ENCODE measurements at regions of chr12 and their contacts with region 1.

Region 1: GRCh38 chr12:45762185-45763110 is 32.9 kb downstream of the ARID2 start:
- DNase-seq: peak in 7 of 9 donors; percentile 2 to 37 (median 14)
- ATAC-seq: peak; percentile 74
- H3K4me3 ChIP-seq: no peak overlapping the region
- H3K4me3 Mint-ChIP-seq: peak overlapping the region in 1 of 10 donors; percentile 31
- H3K27ac ChIP-seq: no peak overlapping the region
- H3K27ac Mint-ChIP-seq: peak overlapping the region in 1 of 9 donors; percentile 49
- H3K4me1 ChIP-seq: peaks cover 0 to 7% of the 10 kb centered on the region in 2 donors
- H3K4me1 Mint-ChIP-seq: peaks cover 16 to 83% (median 64%) of the 10 kb centered on the region in 7 donors
- H3K27me3 ChIP-seq: no peaks in the 10 kb centered on the region
- H3K27me3 Mint-ChIP-seq: no peaks in the 10 kb centered on the region

Region 2: GRCh38 chr12:45773747-45774146 is 11.3 kb after region 1 on chr12:
- CTCF ChIA-PET with region 1: interaction called, 3 read pairs
- POLR2A ChIA-PET with region 1: interaction called, 3 read pairs
- intact Hi-C with region 1: loop called in 1 of 2 experiments (anchors 2 kb)
- DNase-seq: no peak
- ATAC-seq: no peak
- H3K4me3 ChIP-seq: no peak overlapping the region
- H3K4me3 Mint-ChIP-seq: peak overlapping the region in 1 of 10 donors; percentile 23
- H3K27ac ChIP-seq: no peak overlapping the region
- H3K27ac Mint-ChIP-seq: peak overlapping the region in 1 of 9 donors; percentile 20
- H3K4me1 ChIP-seq: peaks cover 0 to 6% of the 10 kb centered on the region in 2 donors
- H3K4me1 Mint-ChIP-seq: peaks cover 18 to 78% (median 65%) of the 10 kb centered on the region in 7 donors
- H3K27me3 ChIP-seq: no peaks in the 10 kb centered on the region
- H3K27me3 Mint-ChIP-seq: no peaks in the 10 kb centered on the region

Region 3: DNA sequence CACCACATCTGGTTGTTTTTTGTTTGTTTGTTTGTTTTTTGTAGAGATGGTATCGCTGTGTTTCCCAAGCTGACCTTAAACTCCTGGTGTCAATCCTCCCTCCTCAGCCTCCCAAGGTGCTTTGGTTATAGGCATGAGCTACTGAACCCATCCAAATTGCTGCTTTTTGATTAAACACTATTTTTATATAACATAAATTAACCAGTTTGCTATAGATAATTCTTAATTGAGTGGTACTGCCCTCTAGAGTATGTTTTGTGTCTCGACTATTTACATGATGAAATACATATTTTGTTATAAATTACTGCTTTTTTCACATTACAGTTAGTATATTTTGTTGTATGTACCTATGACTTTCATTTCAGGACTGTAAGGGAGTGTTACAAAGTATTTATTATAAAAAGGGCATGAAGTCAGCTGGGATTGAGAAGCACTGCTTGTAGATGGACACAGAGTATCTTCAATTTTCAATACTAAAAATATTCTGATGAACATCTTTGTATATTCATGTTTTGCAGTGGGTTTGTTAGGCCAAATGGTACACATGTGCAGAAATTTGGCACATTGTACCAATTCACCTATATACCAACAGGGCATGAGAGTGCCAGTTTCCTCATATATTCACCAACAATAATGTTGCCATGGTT is 242.8 kb after region 1 on chr12:
- CTCF ChIA-PET with region 1: no interaction called
- POLR2A ChIA-PET with region 1: no interaction called
- intact Hi-C with region 1: loop called (anchors 1 to 5 kb)
- DNase-seq: peak in 2 of 9 donors; percentile 13 to 19
- ATAC-seq: no peak
- H3K4me3 ChIP-seq: no peak overlapping the region
- H3K4me3 Mint-ChIP-seq: no peak overlapping the region
- H3K27ac ChIP-seq: no peak overlapping the region
- H3K27ac Mint-ChIP-seq: peak overlapping the region in 1 of 9 donors; percentile 47
- H3K4me1 ChIP-seq: no peaks in the 10 kb centered on the region
- H3K4me1 Mint-ChIP-seq: no peaks in the 10 kb centered on the region
- H3K27me3 ChIP-seq: no peaks in the 10 kb centered on the region
- H3K27me3 Mint-ChIP-seq: peaks cover 0 to 13% (median 0%) of the 10 kb centered on the region in 5 donors